ENCODE measurements at regions of chr6 and their contacts with region 1.

Region 1: DNA sequence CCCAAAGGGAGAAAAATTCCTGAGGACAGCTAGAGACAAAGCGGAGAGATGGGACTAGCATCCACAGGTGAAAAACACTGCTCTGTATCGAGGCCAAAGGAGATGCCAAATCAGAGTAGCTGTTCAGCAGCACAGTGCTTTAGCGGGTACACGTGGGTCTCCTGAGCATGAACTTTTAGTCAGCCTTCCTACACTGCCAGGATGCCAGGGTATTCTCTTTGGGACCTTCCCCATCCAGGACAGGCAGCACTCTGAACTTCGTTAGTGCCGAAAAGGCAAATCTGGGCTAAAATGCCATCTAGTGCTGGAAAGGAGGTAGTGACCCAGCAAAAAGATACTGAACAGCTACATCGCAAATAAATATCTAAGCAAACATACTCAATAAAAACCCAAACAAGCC is 64.9 kb downstream of the C6orf58 start:
- DNase-seq: peak; percentile 19 to 52
- H3K4me3 ChIP-seq: no peak overlapping the region
- H3K27ac ChIP-seq: no peak overlapping the region
- H3K4me1 ChIP-seq: no peaks in the 10 kb centered on the region
- H3K27me3 ChIP-seq: no peaks in the 10 kb centered on the region
- CTCF ChIP-seq: peak; percentile 22 to 77 (median 70)
- EP300 ChIP-seq: no peak
- POLR2A ChIP-seq: no peak
- RAD21 ChIP-seq: peak; percentile 76 to 83

Region 2: DNA sequence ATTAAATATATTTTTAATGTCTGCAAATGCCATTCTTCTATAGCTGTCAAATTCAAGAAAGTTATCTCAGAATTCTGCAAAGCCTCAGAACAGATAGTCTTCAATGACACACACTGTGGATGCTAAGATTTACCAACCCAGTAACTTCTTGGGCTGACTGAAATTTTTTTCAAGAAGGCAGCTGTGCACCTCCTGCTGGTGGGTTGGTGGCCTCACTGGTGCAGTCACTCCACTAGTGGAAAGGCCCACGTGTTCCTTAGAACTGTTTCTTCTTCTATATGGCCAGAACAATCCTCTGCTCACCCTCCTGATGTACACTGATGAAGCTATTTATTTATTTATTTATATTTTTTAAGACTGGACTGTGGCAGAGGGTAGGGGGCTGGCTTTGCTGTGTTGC is 94.7 kb before region 1 on chr6:
- CTCF ChIA-PET with region 1: interaction called, 14 read pairs
- POLR2A ChIA-PET with region 1: no interaction called
- DNase-seq: no peak
- H3K4me3 ChIP-seq: no peak overlapping the region
- H3K27ac ChIP-seq: no peak overlapping the region
- H3K4me1 ChIP-seq: no peaks in the 10 kb centered on the region
- H3K27me3 ChIP-seq: peaks cover 0 to 1% (median 0%) of the 10 kb centered on the region in 4 experiments; a peak in 1 of 7 replicates
- CTCF ChIP-seq: peak; percentile 59 to 66 (median 63)
- EP300 ChIP-seq: no peak
- POLR2A ChIP-seq: no peak
- RAD21 ChIP-seq: peak; percentile 52 to 68

Region 3: GRCh38 chr6:127630800-127631199 is 11.1 kb before region 1 on chr6:
- CTCF ChIA-PET with region 1: interaction called, 15 read pairs
- POLR2A ChIA-PET with region 1: no interaction called
- DNase-seq: no peak
- H3K4me3 ChIP-seq: no peak overlapping the region
- H3K27ac ChIP-seq: no peak overlapping the region
- H3K4me1 ChIP-seq: no peaks in the 10 kb centered on the region
- H3K27me3 ChIP-seq: no peaks in the 10 kb centered on the region
- CTCF ChIP-seq: no peak
- EP300 ChIP-seq: no peak
- POLR2A ChIP-seq: no peak
- RAD21 ChIP-seq: no peak

Region 4: DNA sequence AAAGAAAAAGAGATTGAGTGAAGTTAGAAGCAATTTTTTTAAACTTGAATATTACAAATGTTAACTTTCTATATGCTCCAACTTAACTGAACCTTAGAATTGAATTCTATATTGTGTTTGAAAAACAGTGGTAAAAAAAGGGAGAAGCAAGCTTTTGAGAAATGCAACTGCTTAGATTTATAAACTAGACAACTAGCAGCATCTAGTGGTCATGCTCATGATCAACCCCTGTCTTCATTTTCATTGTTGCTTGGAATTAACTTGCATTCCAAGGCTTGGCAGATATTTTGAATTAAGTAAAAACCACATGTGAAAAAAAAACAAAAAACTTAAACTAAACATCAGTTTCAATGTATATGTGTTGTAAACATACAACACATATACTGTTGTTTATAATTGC is 48.2 kb after region 1 on chr6:
- CTCF ChIA-PET with region 1: interaction called, 10 read pairs
- POLR2A ChIA-PET with region 1: no interaction called
- DNase-seq: no peak
- H3K4me3 ChIP-seq: no peak overlapping the region
- H3K27ac ChIP-seq: no peak overlapping the region
- H3K4me1 ChIP-seq: no peaks in the 10 kb centered on the region
- H3K27me3 ChIP-seq: no peaks in the 10 kb centered on the region
- CTCF ChIP-seq: peak in 2 of 3 experiments; percentile 54 to 74; a peak in 2 of 4 replicates
- EP300 ChIP-seq: no peak
- POLR2A ChIP-seq: no peak
- RAD21 ChIP-seq: peak; percentile 83 to 86

Region 5: DNA sequence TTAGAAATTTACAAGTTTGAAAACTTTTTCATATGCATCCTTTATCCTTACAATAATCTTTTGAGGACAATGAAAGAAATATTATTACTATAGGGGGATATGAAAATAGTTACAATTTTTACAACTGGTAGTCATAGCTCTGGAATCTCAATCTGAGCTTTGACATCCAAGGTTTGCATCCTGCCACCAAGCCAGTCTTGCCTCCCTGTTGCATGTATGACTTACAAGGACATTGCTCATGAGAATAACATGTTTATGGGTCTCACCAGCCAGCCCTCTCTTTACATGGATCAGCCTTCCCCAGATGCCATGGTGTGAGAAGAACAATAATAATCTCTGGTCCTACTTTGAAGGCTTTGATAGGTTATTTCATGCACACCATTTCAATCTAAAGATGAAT is 191.4 kb after region 1 on chr6:
- CTCF ChIA-PET with region 1: no interaction called
- POLR2A ChIA-PET with region 1: no interaction called
- DNase-seq: no peak
- H3K4me3 ChIP-seq: no peak overlapping the region
- H3K27ac ChIP-seq: no peak overlapping the region
- H3K4me1 ChIP-seq: no peaks in the 10 kb centered on the region
- H3K27me3 ChIP-seq: peaks cover 0 to 3% (median 0%) of the 10 kb centered on the region in 4 experiments; a peak in 1 of 7 replicates
- CTCF ChIP-seq: no peak
- EP300 ChIP-seq: no peak
- POLR2A ChIP-seq: no peak
- RAD21 ChIP-seq: no peak

Region 6: DNA sequence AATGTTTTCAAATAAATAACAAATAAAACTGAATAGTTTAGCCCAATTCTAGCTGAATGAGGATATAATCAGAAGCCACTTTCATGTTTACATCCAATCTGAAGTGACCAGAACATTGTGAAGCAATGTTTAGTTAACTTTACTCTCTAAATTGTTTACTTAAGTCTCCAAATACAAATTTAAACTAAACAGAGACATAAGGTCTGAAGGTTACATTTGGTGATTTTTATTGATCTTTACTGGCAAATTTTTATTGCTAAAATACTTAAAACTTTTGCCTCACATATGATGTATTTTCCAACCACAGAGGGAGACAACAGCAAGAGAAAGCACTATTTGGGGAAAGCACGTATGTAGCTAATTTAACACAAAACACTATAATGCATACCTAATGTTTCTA is 365.8 kb after region 1 on chr6:
- CTCF ChIA-PET with region 1: no interaction called
- POLR2A ChIA-PET with region 1: no interaction called
- DNase-seq: no peak
- H3K4me3 ChIP-seq: no peak overlapping the region
- H3K27ac ChIP-seq: no peak overlapping the region
- H3K4me1 ChIP-seq: no peaks in the 10 kb centered on the region; a peak in 1 of 7 replicates
- H3K27me3 ChIP-seq: no peaks in the 10 kb centered on the region
- CTCF ChIP-seq: no peak
- EP300 ChIP-seq: no peak
- POLR2A ChIP-seq: no peak
- RAD21 ChIP-seq: no peak

Measured in H1 (cell line).